ENCODE measurements at regions of chr21 and their contacts with region 1.

Region 1: GRCh38 chr21:38945545-38946245 is 140.0 kb downstream of the ETS2 start:
- DNase-seq: peak; percentile 63
- ATAC-seq: peak; percentile 80
- H3K4me3 Mint-ChIP-seq: peak overlapping the region; percentile 2
- H3K27ac Mint-ChIP-seq: peak overlapping the region; percentile 73; the same call in 1 of the 2 replicates
- H3K4me1 Mint-ChIP-seq: peaks cover 23% of the 10 kb centered on the region
- H3K27me3 Mint-ChIP-seq: peaks cover 7% of the 10 kb centered on the region
- CTCF ChIP-seq: no peak

Region 2: DNA sequence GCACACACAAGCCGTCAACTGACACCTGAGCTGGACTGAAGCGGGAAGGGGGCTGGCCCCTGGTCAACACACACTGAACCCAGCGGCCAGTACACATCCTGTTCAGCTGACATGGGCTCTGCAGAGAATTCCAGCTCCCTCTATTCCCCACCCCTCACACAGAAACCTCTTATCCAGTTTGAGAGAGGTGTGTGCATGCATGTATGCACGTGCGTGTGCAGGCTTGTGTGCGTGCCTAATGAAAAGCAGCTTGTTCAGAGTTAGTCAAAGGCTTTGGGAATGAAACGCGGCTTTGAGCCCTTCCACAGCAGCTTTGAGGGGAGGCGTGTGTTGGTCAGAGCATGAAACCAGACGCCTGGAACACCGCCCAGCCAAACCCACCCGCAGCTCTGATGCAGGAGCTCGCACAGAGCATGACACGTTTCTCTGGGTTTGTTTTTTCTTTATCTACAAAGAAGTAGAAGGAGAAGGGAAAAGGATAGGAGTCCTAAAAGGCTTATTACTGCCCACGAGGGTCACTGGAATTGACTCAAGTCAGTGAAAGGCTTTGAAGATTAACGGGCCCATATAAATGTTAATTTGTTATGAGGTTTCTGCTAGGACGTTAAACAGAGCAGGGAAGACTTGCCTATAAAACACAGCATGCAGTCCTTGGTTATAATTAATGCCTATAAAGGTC is 44.2 kb after region 1 on chr21:
- CTCF ChIA-PET with region 1: interaction called, 10 read pairs
- POLR2A ChIA-PET with region 1: no interaction called
- DNase-seq: no peak
- ATAC-seq: peak; percentile 46
- H3K4me3 Mint-ChIP-seq: no peak overlapping the region
- H3K27ac Mint-ChIP-seq: no peak overlapping the region
- H3K4me1 Mint-ChIP-seq: peaks cover 49% of the 10 kb centered on the region
- H3K27me3 Mint-ChIP-seq: no peaks in the 10 kb centered on the region; the same call in 1 of the 2 replicates
- CTCF ChIP-seq: no peak